ENCODE measurements at regions of chr5 and their contacts with region 1.

Region 1: DNA sequence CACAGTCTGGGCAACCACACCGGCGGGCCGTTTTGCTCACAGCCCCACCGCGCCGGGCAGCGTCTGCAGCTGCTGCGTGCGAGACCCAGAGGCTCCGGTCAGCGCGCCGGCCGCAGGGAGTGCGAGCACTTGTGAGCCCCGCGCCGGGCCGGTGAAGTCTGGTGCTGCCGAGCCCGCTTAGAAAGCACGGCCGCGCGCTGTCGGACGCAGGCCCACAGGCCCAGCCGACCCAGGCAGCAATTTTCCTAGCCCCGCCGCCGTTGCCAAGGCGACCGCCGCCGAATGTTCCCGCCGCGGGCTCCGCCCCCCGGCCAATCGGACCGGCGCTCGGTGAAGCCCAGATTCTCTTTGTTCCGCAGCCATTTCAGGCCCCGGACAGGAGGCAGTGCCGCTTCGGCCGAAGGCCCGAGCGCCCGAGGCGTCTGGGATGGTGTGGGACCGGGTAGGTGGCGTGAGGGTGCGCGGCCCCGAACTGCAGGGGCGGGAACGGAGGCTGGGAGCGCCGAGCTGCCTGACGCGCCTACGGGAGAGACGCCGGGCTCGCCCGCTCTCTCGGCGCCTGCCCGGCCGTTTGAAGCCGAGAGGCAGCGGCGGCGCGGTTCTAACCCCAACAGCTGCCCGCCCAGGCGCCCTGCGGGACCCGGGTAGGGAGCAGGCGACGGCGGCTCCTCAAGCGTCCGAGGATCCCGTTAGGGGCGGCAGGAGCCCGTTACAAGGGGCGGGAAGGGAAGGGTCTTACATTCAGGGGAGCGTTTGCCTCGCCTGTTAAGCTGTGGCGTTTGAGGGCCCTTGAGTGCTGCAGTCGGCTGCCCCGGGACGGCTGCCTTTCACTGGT is at the start of gene TNPO1:
- DNase-seq: peak; percentile 80
- H3K4me3 Mint-ChIP-seq: peak within 1 kb of the TSS; percentile 95
- H3K27ac Mint-ChIP-seq: peak within 1 kb of the TSS; percentile 95
- H3K4me1 Mint-ChIP-seq: peaks cover 22% of the 10 kb centered on the region
- H3K27me3 Mint-ChIP-seq: peaks cover 21% of the 10 kb centered on the region
- total RNA-seq, gene TNPO1: 133 and 142 TPM in 2 replicates

Region 2: GRCh38 chr5:72234265-72234700 is 582.2 kb before region 1 on chr5:
- intact Hi-C with region 1: loop called (anchors 5 kb)
- DNase-seq: peak; percentile 12
- H3K4me3 Mint-ChIP-seq: peak overlapping the region; percentile 32
- H3K27ac Mint-ChIP-seq: no peak overlapping the region
- H3K4me1 Mint-ChIP-seq: peaks cover 29% of the 10 kb centered on the region
- H3K27me3 Mint-ChIP-seq: peaks cover 15% of the 10 kb centered on the region

Region 3: DNA sequence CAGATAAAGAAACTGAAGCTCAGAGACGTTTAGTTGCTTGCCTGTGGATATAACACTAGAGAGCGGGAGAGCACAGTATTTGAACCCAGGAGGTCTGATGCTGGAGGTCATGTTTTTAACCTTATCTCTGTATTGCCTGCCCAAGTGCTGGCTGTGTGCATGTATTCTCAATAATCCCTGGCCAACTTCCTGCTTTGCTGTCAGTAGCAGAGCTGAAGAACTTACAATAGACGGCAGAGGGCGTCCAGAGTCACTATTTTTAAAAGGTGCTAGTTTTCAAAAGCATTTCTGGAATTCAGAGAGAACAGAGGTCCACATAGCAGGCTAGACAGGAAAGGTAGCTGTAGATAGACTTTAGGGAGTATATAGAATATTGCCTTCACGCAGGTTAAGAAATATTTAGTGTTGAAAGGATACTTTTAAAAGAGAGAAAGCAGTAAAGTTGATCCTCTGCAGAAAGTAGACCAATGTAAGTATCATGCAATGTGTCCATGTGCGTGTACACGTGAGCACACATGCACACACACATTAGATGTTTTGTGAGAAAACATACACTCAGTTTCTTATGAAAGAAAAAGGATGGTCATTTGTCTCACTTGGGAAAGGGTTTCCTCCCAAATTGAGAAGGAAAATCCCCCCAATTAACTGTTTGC is 450.1 kb before region 1 on chr5:
- intact Hi-C with region 1: loop called (anchors 10 kb)
- DNase-seq: peak; percentile 8
- H3K4me3 Mint-ChIP-seq: no peak overlapping the region
- H3K27ac Mint-ChIP-seq: no peak overlapping the region
- H3K4me1 Mint-ChIP-seq: no peaks in the 10 kb centered on the region
- H3K27me3 Mint-ChIP-seq: no peaks in the 10 kb centered on the region

Region 4: GRCh38 chr5:72847989-72848473 is 31.5 kb after region 1 on chr5:
- intact Hi-C with region 1: loop called (anchors 1 kb)
- DNase-seq: peak; percentile 80
- H3K4me3 Mint-ChIP-seq: peak overlapping the region; percentile 96
- H3K27ac Mint-ChIP-seq: peak overlapping the region; percentile 99
- H3K4me1 Mint-ChIP-seq: peaks cover 44% of the 10 kb centered on the region
- H3K27me3 Mint-ChIP-seq: peaks cover 7% of the 10 kb centered on the region

Region 5: GRCh38 chr5:72955768-72956323 is 139.3 kb after region 1 on chr5 and contains the start of gene FCHO2:
- intact Hi-C with region 1: loop called (anchors 1 kb)
- DNase-seq: peak; percentile 92
- H3K4me3 Mint-ChIP-seq: peak within 1 kb of the TSS; percentile 86
- H3K27ac Mint-ChIP-seq: peak within 1 kb of the TSS; percentile 70
- H3K4me1 Mint-ChIP-seq: peaks cover 15% of the 10 kb centered on the region
- H3K27me3 Mint-ChIP-seq: peaks cover 57% of the 10 kb centered on the region
- total RNA-seq, gene FCHO2: 0.93 and 2.2 TPM in 2 replicates

Region 6: GRCh38 chr5:73764586-73764985 is 948.1 kb after region 1 on chr5:
- intact Hi-C with region 1: no loop called
- DNase-seq: no peak
- H3K4me3 Mint-ChIP-seq: no peak overlapping the region
- H3K27ac Mint-ChIP-seq: no peak overlapping the region
- H3K4me1 Mint-ChIP-seq: no peaks in the 10 kb centered on the region
- H3K27me3 Mint-ChIP-seq: peaks cover 2% of the 10 kb centered on the region